CD8-positive, alpha-beta T cell (primary cell): ENCODE measurements at regions of chr11 and their contacts with region 1.

Region 1: GRCh38 chr11:67401495-67402191 is at the start of gene PPP1CA:
- DNase-seq: peak; percentile 86 to 98 (median 92)
- ATAC-seq: peak; percentile 78
- H3K4me3 ChIP-seq: peak within 1 kb of the TSS; percentile 88 to 98
- H3K4me3 Mint-ChIP-seq: peak within 1 kb of the TSS; percentile 95
- H3K27ac ChIP-seq: peak within 1 kb of the TSS; percentile 75 to 79
- H3K27ac Mint-ChIP-seq: peak within 1 kb of the TSS; percentile 85
- H3K4me1 ChIP-seq: peaks cover 75% of the 10 kb centered on the region
- H3K4me1 Mint-ChIP-seq: peaks cover 65% of the 10 kb centered on the region
- H3K27me3 ChIP-seq: no peaks in the 10 kb centered on the region
- H3K27me3 Mint-ChIP-seq: no peaks in the 10 kb centered on the region
- CTCF ChIP-seq: peak; percentile 52
- total RNA-seq, gene PPP1CA: 40.5 to 42.2 TPM

Region 2: DNA sequence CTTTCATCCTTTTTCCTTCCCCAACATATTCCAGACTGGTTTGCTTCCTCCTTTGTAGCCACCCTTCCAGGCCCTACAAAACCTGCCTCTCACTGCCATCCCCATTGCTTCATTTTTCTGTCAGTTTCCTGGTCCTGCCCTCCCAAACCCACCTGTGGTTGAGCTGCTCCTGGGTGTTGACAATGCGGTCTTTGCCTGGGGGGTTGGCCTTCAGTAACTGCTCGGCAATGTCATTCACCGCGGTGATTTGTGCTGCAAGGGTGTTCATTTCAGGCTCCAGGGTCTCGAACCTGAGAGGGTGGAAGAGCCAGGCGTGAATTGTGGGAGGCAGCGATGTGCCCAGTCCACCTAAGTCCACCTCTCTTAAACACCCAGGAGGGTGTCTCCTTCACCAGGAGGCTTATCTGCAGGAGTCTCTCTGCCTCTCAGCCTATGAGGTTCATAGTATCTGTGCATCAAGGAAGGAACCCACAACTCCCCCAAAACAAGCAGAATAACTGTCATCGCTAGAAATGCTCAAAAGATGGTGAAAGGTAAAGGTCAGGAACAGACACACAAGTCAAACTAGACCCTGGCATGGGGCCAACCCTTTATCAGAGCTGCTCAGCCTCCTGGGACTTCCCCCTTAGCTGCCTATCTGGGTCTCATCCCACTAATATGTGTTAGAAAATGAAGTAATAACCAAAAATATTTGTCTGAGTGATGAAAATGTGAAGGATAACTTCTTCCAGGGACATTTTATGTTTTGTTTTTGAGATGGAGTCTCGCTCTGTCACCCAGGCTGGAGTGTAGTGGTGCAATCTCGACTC is 700.0 kb before region 1 on chr11:
- CTCF ChIA-PET with region 1: no interaction called
- POLR2A ChIA-PET with region 1: no interaction called
- intact Hi-C with region 1: no loop called
- DNase-seq: no peak
- ATAC-seq: no peak
- H3K4me3 ChIP-seq: no peak overlapping the region
- H3K4me3 Mint-ChIP-seq: no peak overlapping the region
- H3K27ac ChIP-seq: no peak overlapping the region
- H3K27ac Mint-ChIP-seq: no peak overlapping the region
- H3K4me1 ChIP-seq: no peaks in the 10 kb centered on the region
- H3K4me1 Mint-ChIP-seq: peaks cover 2% of the 10 kb centered on the region
- H3K27me3 ChIP-seq: no peaks in the 10 kb centered on the region
- H3K27me3 Mint-ChIP-seq: no peaks in the 10 kb centered on the region
- CTCF ChIP-seq: no peak

Region 3: GRCh38 chr11:67153971-67154370 is 247.7 kb before region 1 on chr11:
- CTCF ChIA-PET with region 1: no interaction called
- POLR2A ChIA-PET with region 1: no interaction called
- intact Hi-C with region 1: no loop called
- DNase-seq: no peak
- ATAC-seq: no peak
- H3K4me3 ChIP-seq: no peak overlapping the region
- H3K4me3 Mint-ChIP-seq: no peak overlapping the region
- H3K27ac ChIP-seq: no peak overlapping the region
- H3K27ac Mint-ChIP-seq: no peak overlapping the region
- H3K4me1 ChIP-seq: no peaks in the 10 kb centered on the region
- H3K4me1 Mint-ChIP-seq: peaks cover 18% of the 10 kb centered on the region
- H3K27me3 ChIP-seq: no peaks in the 10 kb centered on the region
- H3K27me3 Mint-ChIP-seq: no peaks in the 10 kb centered on the region
- CTCF ChIP-seq: no peak

Region 4: GRCh38 chr11:67382276-67383136 is 19.1 kb before region 1 on chr11:
- CTCF ChIA-PET with region 1: interaction called, 43 read pairs
- POLR2A ChIA-PET with region 1: interaction called, 3 read pairs
- intact Hi-C with region 1: no loop called
- DNase-seq: peak; percentile 72 to 90 (median 86)
- ATAC-seq: peak; percentile 98
- H3K4me3 ChIP-seq: no peak overlapping the region
- H3K4me3 Mint-ChIP-seq: no peak overlapping the region
- H3K27ac ChIP-seq: no peak overlapping the region
- H3K27ac Mint-ChIP-seq: no peak overlapping the region
- H3K4me1 ChIP-seq: peaks cover 5% of the 10 kb centered on the region
- H3K4me1 Mint-ChIP-seq: peaks cover 5% of the 10 kb centered on the region
- H3K27me3 ChIP-seq: no peaks in the 10 kb centered on the region
- H3K27me3 Mint-ChIP-seq: no peaks in the 10 kb centered on the region
- CTCF ChIP-seq: peak; percentile 90

Region 5: GRCh38 chr11:67420646-67421420 is 19.2 kb after region 1 on chr11:
- CTCF ChIA-PET with region 1: interaction called, 62 read pairs
- POLR2A ChIA-PET with region 1: interaction called, 275 read pairs
- intact Hi-C with region 1: loop called (anchors 1 kb)
- DNase-seq: peak; percentile 97 to 100 (median 99)
- ATAC-seq: peak; percentile 85
- H3K4me3 ChIP-seq: peak overlapping the region; percentile 49 to 50
- H3K4me3 Mint-ChIP-seq: peak overlapping the region; percentile 86
- H3K27ac ChIP-seq: peak overlapping the region; percentile 55 to 68
- H3K27ac Mint-ChIP-seq: peak overlapping the region; percentile 91
- H3K4me1 ChIP-seq: peaks cover 50% of the 10 kb centered on the region
- H3K4me1 Mint-ChIP-seq: peaks cover 47% of the 10 kb centered on the region
- H3K27me3 ChIP-seq: no peaks in the 10 kb centered on the region
- H3K27me3 Mint-ChIP-seq: no peaks in the 10 kb centered on the region
- CTCF ChIP-seq: no peak

Region 6: GRCh38 chr11:67439321-67439883 is 37.8 kb after region 1 on chr11:
- CTCF ChIA-PET with region 1: interaction called, 29 read pairs
- POLR2A ChIA-PET with region 1: interaction called, 222 read pairs
- intact Hi-C with region 1: loop called (anchors 1 kb)
- DNase-seq: peak in 3 of 9 experiments; percentile 32 to 65 (median 53)
- ATAC-seq: no peak
- H3K4me3 ChIP-seq: peak overlapping the region; percentile 77 to 98
- H3K4me3 Mint-ChIP-seq: peak overlapping the region; percentile 89
- H3K27ac ChIP-seq: peak overlapping the region; percentile 34 to 67
- H3K27ac Mint-ChIP-seq: peak overlapping the region; percentile 94
- H3K4me1 ChIP-seq: peaks cover 64% of the 10 kb centered on the region
- H3K4me1 Mint-ChIP-seq: peaks cover 60% of the 10 kb centered on the region
- H3K27me3 ChIP-seq: no peaks in the 10 kb centered on the region
- H3K27me3 Mint-ChIP-seq: no peaks in the 10 kb centered on the region
- CTCF ChIP-seq: no peak

Region 7: GRCh38 chr11:67482825-67483798 is 81.5 kb after region 1 on chr11 and contains the start of gene AIP:
- CTCF ChIA-PET with region 1: interaction called, 6 read pairs
- POLR2A ChIA-PET with region 1: interaction called, 57 read pairs
- intact Hi-C with region 1: loop called (anchors 1 kb)
- DNase-seq: peak; percentile 94 to 99 (median 97)
- ATAC-seq: peak; percentile 76
- H3K4me3 ChIP-seq: peak within 1 kb of the TSS; percentile 62 to 73
- H3K4me3 Mint-ChIP-seq: peak within 1 kb of the TSS; percentile 93
- H3K27ac ChIP-seq: peak within 1 kb of the TSS; percentile 81 to 89
- H3K27ac Mint-ChIP-seq: peak within 1 kb of the TSS; percentile 99
- H3K4me1 ChIP-seq: peaks cover 48% of the 10 kb centered on the region
- H3K4me1 Mint-ChIP-seq: peaks cover 54% of the 10 kb centered on the region
- H3K27me3 ChIP-seq: no peaks in the 10 kb centered on the region
- H3K27me3 Mint-ChIP-seq: no peaks in the 10 kb centered on the region
- CTCF ChIP-seq: no peak
- total RNA-seq, gene AIP: 109 to 111 TPM

Region 8: GRCh38 chr11:68051191-68052144 is 649.8 kb after region 1 on chr11:
- CTCF ChIA-PET with region 1: no interaction called
- POLR2A ChIA-PET with region 1: no interaction called
- intact Hi-C with region 1: no loop called
- DNase-seq: peak in 1 of 9 experiments; percentile 10
- ATAC-seq: no peak
- H3K4me3 ChIP-seq: no peak overlapping the region
- H3K4me3 Mint-ChIP-seq: no peak overlapping the region
- H3K27ac ChIP-seq: no peak overlapping the region
- H3K27ac Mint-ChIP-seq: peak overlapping the region; percentile 75
- H3K4me1 ChIP-seq: no peaks in the 10 kb centered on the region
- H3K4me1 Mint-ChIP-seq: no peaks in the 10 kb centered on the region
- H3K27me3 ChIP-seq: no peaks in the 10 kb centered on the region
- H3K27me3 Mint-ChIP-seq: no peaks in the 10 kb centered on the region
- CTCF ChIP-seq: no peak